MCF 10A (cell line): ENCODE measurements at regions of chr17 and their contacts with region 1.

Region 1: DNA sequence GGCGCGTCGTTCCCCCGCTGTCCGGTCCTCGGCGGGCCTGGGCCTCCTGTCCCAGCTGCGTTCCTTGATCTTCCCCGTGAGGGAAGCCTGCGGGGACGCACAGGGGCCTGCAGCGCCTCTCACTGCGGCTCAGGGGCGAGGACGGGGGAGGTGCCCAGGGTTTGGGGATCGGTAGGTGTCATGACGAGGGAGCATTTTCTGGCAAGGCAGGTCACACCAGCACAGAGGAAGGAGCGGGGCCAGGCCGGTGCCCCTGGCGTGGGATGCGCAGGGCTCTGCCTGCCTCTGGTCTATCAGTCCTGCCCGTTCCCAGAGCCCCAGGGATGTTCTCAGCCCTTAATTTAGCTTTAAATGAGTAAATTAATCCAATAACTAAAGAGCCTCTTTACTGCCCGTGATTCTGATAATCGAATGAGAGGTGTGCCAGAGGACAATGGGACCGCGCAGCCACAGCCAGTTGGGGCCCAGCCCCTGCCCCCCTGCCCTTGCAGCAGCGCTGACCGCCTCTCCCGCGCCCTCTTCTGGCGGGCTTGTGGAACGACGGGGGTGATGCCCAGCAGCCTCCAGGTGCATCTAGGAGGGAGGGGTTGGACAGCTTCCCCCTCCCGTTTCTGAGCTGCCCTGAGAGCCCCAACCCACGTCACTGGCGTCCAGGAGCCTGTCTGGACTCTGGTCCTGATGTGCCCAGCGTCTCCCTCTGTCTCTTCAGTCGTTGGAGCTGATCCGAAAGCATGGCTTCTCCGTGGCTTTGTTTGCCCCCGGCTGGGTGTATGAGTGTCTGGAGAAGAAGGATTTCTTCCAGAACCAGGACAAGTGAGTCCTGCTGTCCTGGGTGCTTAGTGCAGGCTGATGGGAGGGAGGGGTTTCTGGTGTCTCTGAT is 7.9 kb downstream of the ENGASE start:
- DNase-seq: peak; percentile 52
- H3K4me3 Mint-ChIP-seq: no peak overlapping the region
- H3K27ac Mint-ChIP-seq: no peak overlapping the region
- H3K4me1 Mint-ChIP-seq: no peaks in the 10 kb centered on the region
- H3K27me3 Mint-ChIP-seq: no peaks in the 10 kb centered on the region
- CTCF ChIP-seq: peak; percentile 94

Region 2: DNA sequence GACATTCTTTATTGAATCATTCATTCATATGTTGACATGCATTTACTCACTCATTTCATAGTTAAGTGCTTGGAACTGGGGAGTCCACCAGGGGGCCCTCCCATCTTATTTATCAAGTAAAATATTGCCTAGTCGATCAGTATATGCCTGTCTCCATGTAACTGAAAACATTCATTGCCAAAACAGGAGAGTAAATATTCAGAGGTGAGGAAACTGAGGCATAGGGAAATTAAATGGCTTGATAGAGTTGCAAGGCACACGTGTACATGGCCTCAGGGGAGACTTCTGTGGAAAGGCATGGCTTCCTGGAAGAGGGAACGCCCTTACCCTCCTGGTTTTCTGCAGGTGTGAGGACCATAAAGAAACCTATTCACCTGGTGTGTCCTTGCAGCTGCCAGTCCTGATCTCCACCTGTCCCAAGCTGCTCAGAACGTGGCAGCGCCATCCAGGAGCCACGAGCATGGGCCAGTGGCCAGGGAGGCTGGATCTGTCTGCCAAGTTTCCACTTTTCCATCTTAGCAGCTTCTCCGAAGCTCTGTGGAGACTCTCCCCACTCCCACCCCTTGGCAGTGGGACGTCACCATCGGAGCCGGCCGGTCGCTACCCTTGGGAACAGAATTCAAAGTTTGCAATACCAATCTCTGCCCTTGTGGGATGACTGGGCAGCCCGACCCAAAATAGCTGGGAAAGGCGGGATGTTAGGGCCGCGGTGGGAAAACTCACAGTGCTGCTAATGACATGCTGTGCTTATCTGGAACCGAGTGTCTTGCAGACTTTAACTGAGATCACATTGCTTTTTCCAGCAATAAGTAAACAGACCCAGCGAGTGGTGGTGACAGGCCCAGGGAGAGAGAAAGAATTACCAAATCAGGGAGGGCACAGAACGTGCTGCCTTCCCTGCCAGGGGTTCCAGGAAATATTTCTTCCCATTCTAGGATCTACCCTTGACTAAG is 62.6 kb before region 1 on chr17:
- CTCF ChIA-PET with region 1: interaction called, 10 read pairs
- POLR2A ChIA-PET with region 1: no interaction called
- intact Hi-C with region 1: loop called (anchors 1 kb)
- DNase-seq: peak; percentile 77
- H3K4me3 Mint-ChIP-seq: no peak overlapping the region
- H3K27ac Mint-ChIP-seq: peak overlapping the region; percentile 35
- H3K4me1 Mint-ChIP-seq: peaks cover 24% of the 10 kb centered on the region
- H3K27me3 Mint-ChIP-seq: no peaks in the 10 kb centered on the region
- CTCF ChIP-seq: peak; percentile 84

Region 3: GRCh38 chr17:79045842-79046196 is 36.7 kb before region 1 on chr17:
- CTCF ChIA-PET with region 1: interaction called, 73 read pairs
- POLR2A ChIA-PET with region 1: interaction called, 3 read pairs
- intact Hi-C with region 1: loop called (anchors 1 kb)
- DNase-seq: peak; percentile 75
- H3K4me3 Mint-ChIP-seq: no peak overlapping the region
- H3K27ac Mint-ChIP-seq: no peak overlapping the region
- H3K4me1 Mint-ChIP-seq: peaks cover 17% of the 10 kb centered on the region
- H3K27me3 Mint-ChIP-seq: peaks cover 30% of the 10 kb centered on the region
- CTCF ChIP-seq: peak; percentile 92

Region 4: GRCh38 chr17:79053251-79053925 is 29.2 kb before region 1 on chr17:
- CTCF ChIA-PET with region 1: interaction called, 73 read pairs
- POLR2A ChIA-PET with region 1: no interaction called
- intact Hi-C with region 1: no loop called
- DNase-seq: no peak
- H3K4me3 Mint-ChIP-seq: no peak overlapping the region
- H3K27ac Mint-ChIP-seq: no peak overlapping the region
- H3K4me1 Mint-ChIP-seq: peaks cover 5% of the 10 kb centered on the region
- H3K27me3 Mint-ChIP-seq: peaks cover 12% of the 10 kb centered on the region
- CTCF ChIP-seq: no peak

Region 5: GRCh38 chr17:79065105-79065670 is 17.4 kb before region 1 on chr17:
- CTCF ChIA-PET with region 1: interaction called, 11 read pairs
- POLR2A ChIA-PET with region 1: no interaction called
- intact Hi-C with region 1: no loop called
- DNase-seq: peak; percentile 62
- H3K4me3 Mint-ChIP-seq: no peak overlapping the region
- H3K27ac Mint-ChIP-seq: no peak overlapping the region
- H3K4me1 Mint-ChIP-seq: no peaks in the 10 kb centered on the region
- H3K27me3 Mint-ChIP-seq: no peaks in the 10 kb centered on the region
- CTCF ChIP-seq: peak; percentile 32

Region 6: GRCh38 chr17:79400989-79401703 is 318.6 kb after region 1 on chr17:
- CTCF ChIA-PET with region 1: interaction called, 273 read pairs
- POLR2A ChIA-PET with region 1: no interaction called
- intact Hi-C with region 1: no loop called
- DNase-seq: peak; percentile 60
- H3K4me3 Mint-ChIP-seq: peak overlapping the region; percentile 63
- H3K27ac Mint-ChIP-seq: no peak overlapping the region
- H3K4me1 Mint-ChIP-seq: peaks cover 11% of the 10 kb centered on the region
- H3K27me3 Mint-ChIP-seq: peaks cover 78% of the 10 kb centered on the region
- CTCF ChIP-seq: peak; percentile 85